Aorta (tissue), 5 donors: ENCODE measurements at regions of chr4 and their contacts with region 1.

Region 1: GRCh38 chr4:79049840-79050540 is 110.8 kb upstream of the PAQR3 start:
- DNase-seq: peak in 1 of 2 donors; percentile 71
- ATAC-seq: no peak
- H3K4me3 ChIP-seq: no peak overlapping the region
- H3K27ac ChIP-seq: no peak overlapping the region
- H3K4me1 ChIP-seq: peaks cover 0 to 1% of the 10 kb centered on the region in 2 donors
- H3K27me3 ChIP-seq: no peaks in the 10 kb centered on the region

Region 2: GRCh38 chr4:79249881-79250503 is 200.0 kb after region 1 on chr4:
- intact Hi-C with region 1: no loop called
- DNase-seq: peak in 1 of 2 donors; percentile 62
- ATAC-seq: no peak
- H3K4me3 ChIP-seq: no peak overlapping the region
- H3K27ac ChIP-seq: no peak overlapping the region
- H3K4me1 ChIP-seq: no peaks in the 10 kb centered on the region
- H3K27me3 ChIP-seq: no peaks in the 10 kb centered on the region

Region 3: GRCh38 chr4:80215449-80216052 is 1165.6 kb after region 1 on chr4:
- intact Hi-C with region 1: loop called in 1 of 2 experiments (anchors 5 kb)
- DNase-seq: no peak
- ATAC-seq: no peak
- H3K4me3 ChIP-seq: no peak overlapping the region
- H3K27ac ChIP-seq: no peak overlapping the region
- H3K4me1 ChIP-seq: no peaks in the 10 kb centered on the region
- H3K27me3 ChIP-seq: no peaks in the 10 kb centered on the region